Right lobe of liver (tissue), 6 donors: ENCODE measurements at regions of chr3 and their contacts with region 1.

Region 1: DNA sequence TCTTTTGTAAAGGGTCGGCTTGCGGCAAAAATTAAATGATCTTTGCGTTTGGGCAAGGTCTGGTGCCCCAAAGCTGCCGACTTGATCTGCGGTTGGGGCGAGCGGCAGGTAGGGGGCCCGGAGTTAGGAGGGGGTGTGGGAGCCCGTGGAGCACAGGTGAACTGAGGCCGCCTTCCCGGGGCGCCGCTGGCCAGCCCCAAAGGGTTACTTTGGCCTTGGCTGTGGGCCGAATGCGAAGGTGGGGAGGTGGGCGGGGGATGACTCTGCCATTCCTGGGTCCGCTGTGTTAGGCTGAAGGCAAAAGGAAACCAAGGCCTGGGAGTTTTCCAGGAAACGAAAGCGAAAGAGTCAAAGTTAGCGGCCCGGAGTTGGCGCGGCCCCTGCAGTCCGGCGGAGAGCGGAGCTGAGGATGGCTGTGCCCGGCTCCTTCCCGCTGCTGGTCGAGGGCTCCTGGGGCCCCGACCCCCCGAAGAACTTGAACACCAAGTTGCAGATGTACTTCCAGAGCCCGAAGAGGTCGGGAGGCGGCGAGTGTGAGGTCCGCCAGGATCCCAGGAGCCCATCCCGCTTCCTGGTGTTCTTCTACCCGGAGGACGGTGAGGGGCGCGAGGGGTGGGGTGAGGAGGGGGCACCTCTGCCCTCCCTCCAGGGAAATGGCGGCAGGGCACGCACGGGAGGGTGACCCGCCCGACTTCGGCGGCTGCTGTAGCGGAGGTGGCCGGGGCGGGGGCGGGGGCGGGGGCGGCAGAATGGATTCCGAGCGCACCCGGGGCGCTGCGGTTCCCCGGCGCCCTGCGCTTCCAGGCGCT is at the start of gene PARP14:
- DNase-seq: peak; percentile 82 to 85 (median 82)
- ATAC-seq: peak; percentile 80 to 86 (median 83)
- H3K4me3 ChIP-seq: peak within 1 kb of the TSS; percentile 55 to 91 (median 83)
- H3K27ac ChIP-seq: peak within 1 kb of the TSS; percentile 95 to 98 (median 97)
- H3K4me1 ChIP-seq: peaks cover 0 to 43% (median 13%) of the 10 kb centered on the region in 4 donors
- H3K27me3 ChIP-seq: no peaks in the 10 kb centered on the region
- CTCF ChIP-seq: peak in 3 of 4 donors; percentile 6 to 36 (median 10)
- POLR2A ChIP-seq: peak; percentile 63
- total RNA-seq, gene PARP14: 35.2 to 111 (median 37.3) TPM

Region 2: GRCh38 chr3:122403489-122403888 is 277.2 kb before region 1 on chr3:
- intact Hi-C with region 1: no loop called
- DNase-seq: no peak
- ATAC-seq: no peak
- H3K4me3 ChIP-seq: no peak overlapping the region
- H3K27ac ChIP-seq: no peak overlapping the region
- H3K4me1 ChIP-seq: peaks cover 0 to 4% (median 0%) of the 10 kb centered on the region in 4 donors
- H3K27me3 ChIP-seq: no peaks in the 10 kb centered on the region
- CTCF ChIP-seq: no peak
- POLR2A ChIP-seq: no peak

Region 3: DNA sequence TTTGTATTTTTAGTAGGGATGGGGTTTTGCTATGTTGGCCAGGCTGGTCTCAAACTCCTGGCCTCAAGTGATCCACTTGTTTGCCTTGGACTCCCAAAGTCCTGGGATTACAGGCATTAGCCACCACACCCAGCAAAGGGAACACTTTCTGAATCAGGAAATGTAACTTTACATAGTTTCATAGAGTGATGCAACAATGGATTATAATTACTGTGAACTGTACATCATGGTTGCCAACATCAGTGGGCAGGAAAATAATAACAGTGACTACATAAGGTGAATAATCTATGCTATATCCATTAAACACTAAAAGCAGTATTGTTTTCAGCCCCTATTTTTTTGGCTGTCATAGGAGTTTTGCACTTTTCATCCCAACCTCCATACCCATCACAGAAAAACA is 161.0 kb before region 1 on chr3:
- intact Hi-C with region 1: no loop called
- DNase-seq: no peak
- ATAC-seq: no peak
- H3K4me3 ChIP-seq: no peak overlapping the region
- H3K27ac ChIP-seq: no peak overlapping the region
- H3K4me1 ChIP-seq: peaks cover 0 to 15% (median 6%) of the 10 kb centered on the region in 4 donors
- H3K27me3 ChIP-seq: no peaks in the 10 kb centered on the region
- CTCF ChIP-seq: no peak
- POLR2A ChIP-seq: no peak

Region 4: GRCh38 chr3:122564155-122564912 is 116.3 kb before region 1 on chr3 and contains the starts of genes DTX3L and PARP9:
- intact Hi-C with region 1: loop called (anchors 5 to 10 kb)
- DNase-seq: peak; percentile 92 to 95 (median 93)
- ATAC-seq: peak; percentile 90 to 98 (median 94)
- H3K4me3 ChIP-seq: peak within 1 kb of the TSS; percentile 70 to 94 (median 76)
- H3K27ac ChIP-seq: peak within 1 kb of the TSS; percentile 97 to 99 (median 99)
- H3K4me1 ChIP-seq: peaks cover 0 to 56% (median 18%) of the 10 kb centered on the region in 4 donors
- H3K27me3 ChIP-seq: no peaks in the 10 kb centered on the region
- CTCF ChIP-seq: no peak
- POLR2A ChIP-seq: peak; percentile 85
- total RNA-seq, gene DTX3L: 31.3 to 63.7 (median 38.4) TPM
- total RNA-seq, gene PARP9: 35.5 to 64.7 (median 42.5) TPM